Activated T-helper 1 cell treated with anti-CD3 and anti-CD28 coated beads, Interleukin-12 subunit alpha, Interleukin-12 subunit beta, Interleukin-2, Interleukin-4 antibody, amounts not matched to agents 30 ng/mL and 10 ng/mL and 1 ng/mL, durations not matched to agents 14 hours and 24 hours and 36 hours (primary cell): ENCODE measurements at regions of chr1 and their contacts with region 1.

Region 1: GRCh38 chr1:212302745-212303383 is 17.7 kb downstream of the PPP2R5A start:
- DNase-seq: no peak
- H3K4me3 Mint-ChIP-seq: no peak overlapping the region
- H3K27ac Mint-ChIP-seq: peak overlapping the region; percentile 42
- H3K4me1 Mint-ChIP-seq: peaks cover 29% of the 10 kb centered on the region
- H3K27me3 Mint-ChIP-seq: no peaks in the 10 kb centered on the region

Region 2: DNA sequence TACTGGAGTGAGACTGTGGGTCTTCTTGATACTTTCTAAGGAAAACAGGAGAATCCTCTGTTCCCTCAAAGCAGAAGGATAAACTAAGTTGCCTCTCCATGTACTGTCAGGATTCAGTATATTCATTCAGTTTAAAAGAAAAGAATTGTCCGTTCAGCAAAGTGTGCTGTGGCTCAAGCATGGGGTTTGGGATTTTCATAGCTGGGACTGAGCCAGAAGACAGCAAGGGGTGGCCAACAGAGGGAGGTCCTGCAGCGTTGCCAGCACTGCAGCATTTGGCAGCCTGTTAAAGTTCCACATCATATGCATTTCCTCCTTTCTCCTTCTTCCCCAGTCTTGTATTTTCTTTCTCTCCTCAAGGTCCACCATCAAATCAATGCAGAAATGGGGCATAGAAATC is 192.2 kb before region 1 on chr1:
- intact Hi-C with region 1: no loop called
- DNase-seq: no peak
- H3K4me3 Mint-ChIP-seq: no peak overlapping the region
- H3K27ac Mint-ChIP-seq: no peak overlapping the region
- H3K4me1 Mint-ChIP-seq: peaks cover under 1% of the 10 kb centered on the region
- H3K27me3 Mint-ChIP-seq: no peaks in the 10 kb centered on the region

Region 3: DNA sequence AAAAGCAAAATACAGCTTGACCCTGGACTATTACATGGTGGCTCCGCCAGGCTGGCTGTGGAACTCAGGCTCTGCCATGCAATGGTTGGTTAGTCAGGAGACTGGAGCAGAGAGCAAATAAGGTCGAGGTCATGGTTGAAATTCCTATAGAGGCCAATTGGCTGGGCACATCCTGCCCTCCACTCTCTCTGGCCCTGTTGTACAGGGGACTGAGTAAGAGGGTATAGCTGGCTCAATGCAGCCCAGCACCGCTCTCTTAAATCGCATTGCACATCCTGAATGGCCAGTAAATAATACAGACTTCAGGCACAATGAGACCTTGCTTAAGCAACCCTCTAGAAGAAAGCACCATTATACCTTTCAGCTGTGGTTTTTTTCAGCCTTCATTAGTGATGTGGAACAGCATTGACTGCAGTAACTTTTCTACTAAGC is 77.0 kb before region 1 on chr1:
- intact Hi-C with region 1: loop called (anchors 1 kb)
- DNase-seq: no peak
- H3K4me3 Mint-ChIP-seq: peak overlapping the region; percentile 69
- H3K27ac Mint-ChIP-seq: peak overlapping the region; percentile 96
- H3K4me1 Mint-ChIP-seq: peaks cover 50% of the 10 kb centered on the region
- H3K27me3 Mint-ChIP-seq: no peaks in the 10 kb centered on the region

Region 4: GRCh38 chr1:212291505-212292134 is 11.2 kb before region 1 on chr1:
- intact Hi-C with region 1: loop called (anchors 1 kb)
- DNase-seq: no peak
- H3K4me3 Mint-ChIP-seq: peak overlapping the region; percentile 2
- H3K27ac Mint-ChIP-seq: peak overlapping the region; percentile 67
- H3K4me1 Mint-ChIP-seq: peaks cover 88% of the 10 kb centered on the region
- H3K27me3 Mint-ChIP-seq: peaks cover 2% of the 10 kb centered on the region

Region 5: GRCh38 chr1:212315907-212316306 is 13.0 kb after region 1 on chr1:
- intact Hi-C with region 1: loop called (anchors 1 kb)
- DNase-seq: no peak
- H3K4me3 Mint-ChIP-seq: no peak overlapping the region
- H3K27ac Mint-ChIP-seq: no peak overlapping the region
- H3K4me1 Mint-ChIP-seq: peaks cover 24% of the 10 kb centered on the region
- H3K27me3 Mint-ChIP-seq: no peaks in the 10 kb centered on the region